ENCODE measurements at regions of chr2 and their contacts with region 1.

Region 1: DNA sequence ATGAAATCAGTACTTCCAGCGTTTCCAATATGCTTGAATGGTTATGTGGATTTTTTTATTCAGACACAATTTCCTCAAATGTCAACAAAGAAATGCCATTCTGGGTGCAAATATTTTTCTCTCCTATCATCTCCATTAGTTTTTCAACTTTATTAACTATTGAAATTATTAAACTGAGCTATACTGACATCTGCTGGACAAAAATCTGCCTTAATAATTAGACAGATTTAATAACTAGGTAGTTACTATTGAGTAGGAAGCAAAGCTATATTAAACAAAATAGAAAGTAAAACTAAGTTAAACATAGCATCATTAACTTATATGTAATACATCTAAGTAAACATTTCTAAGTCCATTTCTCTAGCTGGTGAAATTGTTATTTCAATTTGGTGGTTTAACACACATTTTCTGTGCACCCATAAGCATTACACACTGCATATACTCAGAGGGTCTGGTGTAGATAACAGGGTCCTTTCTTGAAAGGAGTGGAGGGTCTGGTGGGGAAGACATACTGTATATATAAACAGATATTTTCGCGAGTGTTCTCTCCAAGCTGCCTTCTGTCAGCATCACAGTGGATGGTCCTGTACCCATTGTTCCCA is 77.0 kb downstream of the LANCL1 start:
- DNase-seq: no peak
- H3K4me3 ChIP-seq: no peak overlapping the region
- H3K27ac ChIP-seq: no peak overlapping the region
- H3K4me1 ChIP-seq: no peaks in the 10 kb centered on the region
- H3K27me3 ChIP-seq: no peaks in the 10 kb centered on the region
- CTCF ChIP-seq: peak; percentile 59

Region 2: GRCh38 chr2:210252699-210253606 is 146.6 kb before region 1 on chr2:
- intact Hi-C with region 1: loop called (anchors 1 kb)
- DNase-seq: no peak
- H3K4me3 ChIP-seq: no peak overlapping the region
- H3K27ac ChIP-seq: no peak overlapping the region
- H3K4me1 ChIP-seq: no peaks in the 10 kb centered on the region
- H3K27me3 ChIP-seq: no peaks in the 10 kb centered on the region
- CTCF ChIP-seq: no peak